GM10248 (cell line): ENCODE measurements at regions of chr9 and their contacts with region 1.

Region 1: GRCh38 chr9:113657703-113658544 is 194.4 kb downstream of the RGS3 start:
- DNase-seq: peak; percentile 88
- CTCF ChIP-seq: peak; percentile 91

Region 2: GRCh38 chr9:113238859-113239232 is 419.1 kb before region 1 on chr9:
- CTCF ChIA-PET with region 1: no interaction called
- POLR2A ChIA-PET with region 1: no interaction called
- DNase-seq: no peak
- CTCF ChIP-seq: no peak

Region 3: DNA sequence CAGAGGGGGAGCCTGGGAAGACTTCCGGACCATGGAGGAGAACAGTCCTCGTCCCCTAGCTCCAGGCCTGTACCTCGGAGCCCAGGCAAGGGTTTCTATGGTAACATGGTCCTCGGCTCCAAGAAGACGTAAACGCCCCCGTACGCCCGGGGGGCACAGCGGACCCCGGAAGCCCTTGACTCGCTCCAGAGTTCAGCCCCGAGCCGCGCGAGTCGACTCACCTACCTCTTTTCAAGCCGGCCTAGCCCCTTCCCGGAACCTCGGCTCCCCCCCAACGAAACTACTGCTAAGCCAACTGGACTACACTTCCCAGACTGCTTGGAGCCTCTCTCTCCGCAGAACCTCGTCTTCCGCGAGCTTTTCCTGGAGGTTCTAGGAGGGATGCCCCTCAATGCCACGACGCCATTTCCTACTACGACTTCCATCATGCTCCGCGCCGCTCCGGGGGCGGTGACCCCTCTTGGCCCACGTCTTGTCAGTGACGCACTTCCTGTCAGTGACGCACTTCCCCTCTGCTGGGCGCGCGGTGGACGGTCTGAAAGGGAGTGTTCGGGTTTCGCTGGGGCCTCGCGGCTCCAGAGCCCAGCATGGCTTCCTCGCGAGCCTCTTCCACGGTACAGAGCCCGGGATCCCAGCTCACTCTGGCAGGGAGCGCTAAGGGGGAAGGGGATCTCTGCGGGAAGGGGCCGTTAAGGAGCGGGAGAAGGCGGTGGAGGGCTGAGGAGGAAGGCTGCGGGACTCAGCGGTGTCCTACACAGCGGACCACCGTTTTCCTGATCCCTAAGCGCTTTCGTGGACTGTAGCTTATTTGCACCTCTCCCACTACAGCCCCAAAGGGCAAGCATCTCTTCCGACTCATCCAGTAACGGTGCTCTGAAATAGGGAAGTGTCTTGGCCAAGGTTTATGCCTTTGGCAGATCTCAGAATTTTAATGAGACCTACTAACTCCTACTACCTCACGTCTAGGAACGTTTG is 382.5 kb before region 1 on chr9 and contains the starts of genes CDC26 and PRPF4:
- CTCF ChIA-PET with region 1: interaction called, 76 read pairs
- POLR2A ChIA-PET with region 1: no interaction called
- DNase-seq: peak; percentile 97
- CTCF ChIP-seq: no peak

Region 4: DNA sequence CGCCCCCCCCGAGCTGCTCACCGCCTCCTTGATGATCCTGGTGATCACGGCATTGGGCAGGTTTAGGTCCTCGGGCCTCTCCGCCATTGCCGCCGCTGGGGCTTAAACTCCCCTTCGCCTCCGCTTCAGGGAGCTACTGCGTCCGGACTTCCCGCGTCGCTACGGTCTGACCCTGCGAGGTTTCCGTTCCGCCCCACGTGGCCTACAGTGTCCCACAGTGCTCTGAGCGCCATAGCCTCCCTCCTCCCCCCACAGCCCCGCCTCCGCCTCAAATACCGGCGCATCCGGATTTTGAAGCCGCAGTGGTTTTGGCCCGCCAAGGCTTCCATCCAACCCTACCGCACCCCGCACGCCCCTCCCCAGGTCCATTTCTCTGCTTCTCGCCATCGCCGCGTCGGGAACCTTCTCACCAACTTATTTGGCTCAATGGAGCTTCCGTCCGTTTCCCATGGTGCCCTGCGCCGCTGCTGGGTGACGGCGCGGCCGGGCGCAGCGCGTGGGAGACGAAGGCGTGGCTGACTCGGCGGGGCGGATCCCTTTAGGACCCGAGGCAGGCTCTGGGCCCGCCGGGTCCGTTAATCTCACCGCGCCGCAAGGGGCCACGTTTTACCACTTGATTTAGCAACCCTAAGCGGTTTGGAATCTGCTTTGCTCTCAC is 247.6 kb before region 1 on chr9 and contains the starts of genes C9orf43 and POLE3:
- CTCF ChIA-PET with region 1: interaction called, 102 read pairs
- POLR2A ChIA-PET with region 1: no interaction called
- DNase-seq: peak; percentile 95
- CTCF ChIP-seq: peak; percentile 1

Region 5: GRCh38 chr9:113492343-113493212 is 165.3 kb before region 1 on chr9:
- CTCF ChIA-PET with region 1: interaction called, 15 read pairs
- POLR2A ChIA-PET with region 1: no interaction called
- DNase-seq: no peak
- CTCF ChIP-seq: no peak

Region 6: GRCh38 chr9:113602126-113603044 is 55.5 kb before region 1 on chr9:
- CTCF ChIA-PET with region 1: interaction called, 422 read pairs
- POLR2A ChIA-PET with region 1: no interaction called
- DNase-seq: peak; percentile 83
- CTCF ChIP-seq: no peak

Region 7: DNA sequence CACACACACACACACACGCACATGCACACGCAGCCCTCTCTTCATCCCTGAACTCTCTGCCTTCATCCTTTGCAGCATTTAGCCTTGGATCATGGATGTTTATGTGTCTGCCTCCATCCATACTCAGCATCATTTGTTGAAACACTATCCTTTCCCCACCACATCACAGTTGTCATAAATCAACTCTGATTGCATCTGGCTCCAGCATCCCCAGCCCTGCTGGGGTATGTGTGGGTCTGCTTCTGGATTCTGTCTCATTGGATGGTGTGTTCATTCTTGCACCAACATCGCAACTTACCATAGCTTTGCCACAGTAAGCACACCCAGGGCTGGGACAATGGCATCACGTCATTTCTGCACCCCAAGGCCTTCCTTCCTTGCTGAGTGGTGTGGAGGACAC is 19.0 kb before region 1 on chr9:
- CTCF ChIA-PET with region 1: interaction called, 134 read pairs
- POLR2A ChIA-PET with region 1: no interaction called
- DNase-seq: no peak
- CTCF ChIP-seq: no peak

Region 8: DNA sequence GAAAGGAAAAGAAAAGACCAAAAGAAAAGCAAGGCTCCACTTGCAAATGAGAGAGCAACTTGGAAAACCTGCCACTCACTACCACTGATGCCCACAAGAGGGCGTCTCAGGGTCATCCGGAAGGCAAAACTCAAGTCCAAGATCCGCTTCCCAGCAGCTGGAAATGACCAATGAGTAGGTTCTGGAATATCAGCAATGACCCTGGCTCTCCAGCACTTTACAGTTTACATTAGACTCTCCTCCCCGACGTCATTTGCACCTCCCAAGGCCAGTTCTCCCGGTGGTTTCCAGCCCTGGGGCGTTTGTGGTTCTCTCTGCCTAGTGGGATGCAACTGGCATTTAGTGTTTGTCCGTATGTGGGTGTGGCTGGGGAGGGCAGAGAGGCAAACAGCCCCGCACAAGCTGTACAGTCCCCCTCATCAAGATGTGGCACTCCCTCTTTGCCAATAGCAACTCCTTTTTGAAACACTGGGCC is 24.4 kb after region 1 on chr9:
- CTCF ChIA-PET with region 1: interaction called, 10 read pairs
- POLR2A ChIA-PET with region 1: no interaction called
- DNase-seq: peak; percentile 62
- CTCF ChIP-seq: peak; percentile 71